H1 (cell line): ENCODE measurements at regions of chr6 and their contacts with region 1.

Region 1: DNA sequence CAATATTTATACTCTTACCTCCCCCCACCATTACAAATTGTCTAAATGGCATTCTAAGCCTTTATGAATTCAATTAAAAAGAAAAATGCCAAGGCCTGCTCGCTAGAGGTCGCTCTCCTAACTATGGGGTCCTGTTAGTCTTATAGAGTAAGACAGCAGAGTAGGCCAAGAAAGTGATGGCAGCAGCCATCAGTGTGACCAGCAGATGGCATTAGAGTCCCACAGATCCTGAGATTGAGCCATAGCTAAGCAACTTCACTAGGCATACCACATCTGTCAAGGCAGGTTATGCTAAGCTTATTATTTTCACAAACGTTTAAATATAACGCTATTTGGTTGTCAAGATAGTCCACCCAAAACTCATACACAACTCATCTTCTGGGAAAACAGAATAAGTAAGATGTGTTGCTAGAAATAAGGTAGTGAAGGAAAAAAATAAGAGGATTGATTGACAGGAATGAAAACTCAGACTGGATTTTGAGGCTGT is 57.6 kb upstream of the SCAF8 start:
- DNase-seq: peak; percentile 88 to 89
- H3K4me3 ChIP-seq: no peak overlapping the region
- H3K27ac ChIP-seq: no peak overlapping the region
- H3K4me1 ChIP-seq: no peaks in the 10 kb centered on the region
- H3K27me3 ChIP-seq: no peaks in the 10 kb centered on the region
- CTCF ChIP-seq: peak; percentile 65 to 100 (median 99)
- EP300 ChIP-seq: no peak
- POLR2A ChIP-seq: no peak
- RAD21 ChIP-seq: peak; percentile 100

Region 2: GRCh38 chr6:154555073-154555677 is 120.5 kb before region 1 on chr6:
- CTCF ChIA-PET with region 1: no interaction called
- POLR2A ChIA-PET with region 1: no interaction called
- DNase-seq: no peak
- H3K4me3 ChIP-seq: no peak overlapping the region
- H3K27ac ChIP-seq: no peak overlapping the region
- H3K4me1 ChIP-seq: no peaks in the 10 kb centered on the region; a peak in 1 of 7 replicates
- H3K27me3 ChIP-seq: no peaks in the 10 kb centered on the region
- CTCF ChIP-seq: no peak
- EP300 ChIP-seq: no peak
- POLR2A ChIP-seq: no peak
- RAD21 ChIP-seq: no peak

Region 3: DNA sequence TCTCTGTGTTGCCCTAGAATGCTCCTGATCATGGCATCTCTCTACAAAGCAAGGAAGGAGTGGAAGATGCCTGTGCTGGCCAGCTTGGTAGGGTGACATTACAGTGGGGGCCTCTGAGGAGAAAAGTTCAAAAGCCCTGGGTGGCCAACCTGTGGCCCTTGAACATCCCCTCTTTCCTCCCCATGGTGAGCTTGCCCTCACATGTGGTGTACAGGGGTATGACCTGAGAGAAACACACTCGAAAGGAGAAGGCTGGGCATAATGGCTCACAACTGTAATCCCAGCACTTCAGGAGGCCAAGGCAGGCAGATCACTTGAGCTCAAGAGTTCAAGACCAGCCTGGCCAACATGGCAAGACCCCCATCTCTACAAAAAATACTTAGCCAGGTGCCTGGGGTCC is 21.0 kb after region 1 on chr6:
- CTCF ChIA-PET with region 1: interaction called, 14 read pairs
- POLR2A ChIA-PET with region 1: interaction called, 3 read pairs
- DNase-seq: no peak
- H3K4me3 ChIP-seq: no peak overlapping the region
- H3K27ac ChIP-seq: no peak overlapping the region
- H3K4me1 ChIP-seq: no peaks in the 10 kb centered on the region
- H3K27me3 ChIP-seq: no peaks in the 10 kb centered on the region
- CTCF ChIP-seq: no peak
- EP300 ChIP-seq: no peak
- POLR2A ChIP-seq: no peak
- RAD21 ChIP-seq: no peak

Region 4: GRCh38 chr6:154800338-154800737 is 124.7 kb after region 1 on chr6:
- CTCF ChIA-PET with region 1: interaction called, 40 read pairs
- POLR2A ChIA-PET with region 1: no interaction called
- DNase-seq: no peak
- H3K4me3 ChIP-seq: no peak overlapping the region
- H3K27ac ChIP-seq: no peak overlapping the region
- H3K4me1 ChIP-seq: no peaks in the 10 kb centered on the region
- H3K27me3 ChIP-seq: no peaks in the 10 kb centered on the region
- CTCF ChIP-seq: no peak
- EP300 ChIP-seq: no peak
- POLR2A ChIP-seq: no peak
- RAD21 ChIP-seq: no peak

Region 5: GRCh38 chr6:154852687-154853086 is 177.0 kb after region 1 on chr6:
- CTCF ChIA-PET with region 1: interaction called, 10 read pairs
- POLR2A ChIA-PET with region 1: no interaction called
- DNase-seq: no peak
- H3K4me3 ChIP-seq: no peak overlapping the region
- H3K27ac ChIP-seq: no peak overlapping the region
- H3K4me1 ChIP-seq: no peaks in the 10 kb centered on the region
- H3K27me3 ChIP-seq: no peaks in the 10 kb centered on the region
- CTCF ChIP-seq: no peak
- EP300 ChIP-seq: no peak
- POLR2A ChIP-seq: no peak
- RAD21 ChIP-seq: no peak

Region 6: DNA sequence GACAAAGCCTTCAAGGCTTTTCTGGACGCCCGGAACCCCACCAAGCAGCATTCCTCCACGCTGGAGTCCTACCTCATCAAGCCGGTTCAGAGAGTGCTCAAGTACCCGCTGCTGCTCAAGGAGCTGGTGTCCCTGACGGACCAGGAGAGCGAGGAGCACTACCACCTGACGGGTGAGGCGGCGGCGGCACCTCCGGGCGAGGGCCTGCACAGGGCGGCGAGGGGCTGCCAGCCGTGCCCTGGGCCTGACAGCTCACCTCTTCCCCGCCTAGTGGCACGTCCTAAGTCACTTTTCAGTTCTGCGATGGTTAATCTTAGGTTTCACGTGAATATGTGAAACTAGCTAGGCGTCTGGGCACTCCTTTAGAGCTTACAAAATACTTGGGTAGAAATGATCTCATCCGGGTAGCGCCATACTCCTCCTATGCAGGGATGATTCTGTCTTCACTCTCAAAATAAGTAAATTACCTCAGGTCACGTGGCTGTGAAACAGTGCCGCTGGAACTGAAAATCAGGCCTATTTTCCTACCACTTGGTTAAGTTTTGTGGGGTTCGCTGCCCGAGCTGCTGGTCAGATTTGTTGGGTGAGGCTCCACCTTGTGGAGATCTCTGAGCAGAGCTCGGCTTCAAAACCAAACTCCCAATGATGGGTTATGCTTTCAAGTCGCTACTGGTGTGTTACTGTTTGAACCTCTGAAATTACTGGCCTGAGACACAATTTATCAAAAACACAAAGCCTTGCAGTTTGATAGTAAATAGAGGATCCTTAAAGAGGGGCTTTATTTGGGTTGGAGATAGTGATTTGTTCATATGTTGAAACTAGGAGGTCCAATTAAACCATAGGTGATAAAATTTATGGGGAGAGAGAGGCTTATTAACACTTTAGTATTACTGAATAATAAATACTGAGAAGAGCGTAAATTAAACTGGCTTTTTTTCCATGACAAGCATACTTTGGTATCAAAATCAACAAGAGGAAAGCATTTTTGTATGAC is 572.7 kb after region 1 on chr6:
- CTCF ChIA-PET with region 1: interaction called, 10 read pairs
- POLR2A ChIA-PET with region 1: no interaction called
- DNase-seq: peak in 1 of 2 experiments; percentile 67
- H3K4me3 ChIP-seq: no peak overlapping the region
- H3K27ac ChIP-seq: no peak overlapping the region
- H3K4me1 ChIP-seq: 0 out of 7 replicates have a peak, but pooled peaks cover 0 to 3% (median 0%) of the 10 kb centered on the region in 4 experiments
- H3K27me3 ChIP-seq: no peaks in the 10 kb centered on the region
- CTCF ChIP-seq: peak; percentile 71 to 91 (median 82)
- EP300 ChIP-seq: no peak
- POLR2A ChIP-seq: no peak
- RAD21 ChIP-seq: peak; percentile 86 to 90